Caco-2 (cell line): ENCODE measurements at regions of chr2 and their contacts with region 1.

Region 1: GRCh38 chr2:211248847-211249246 is 692.4 kb downstream of the CPS1 start:
- DNase-seq: peak in 1 of 2 experiments; percentile 13
- H3K4me3 ChIP-seq: no peak overlapping the region
- H3K4me3 Mint-ChIP-seq: no peak overlapping the region
- H3K27ac Mint-ChIP-seq: no peak overlapping the region
- H3K4me1 ChIP-seq: peaks cover 23% of the 10 kb centered on the region
- H3K4me1 Mint-ChIP-seq: peaks cover 8% of the 10 kb centered on the region
- H3K27me3 ChIP-seq: no peaks in the 10 kb centered on the region
- H3K27me3 Mint-ChIP-seq: no peaks in the 10 kb centered on the region
- CTCF ChIP-seq: no peak

Region 2: GRCh38 chr2:211237586-211238275 is 11.1 kb before region 1 on chr2:
- CTCF ChIA-PET with region 1: no interaction called
- POLR2A ChIA-PET with region 1: no interaction called
- intact Hi-C with region 1: loop called (anchors 1 kb)
- DNase-seq: peak in 1 of 2 experiments; percentile 9
- H3K4me3 ChIP-seq: no peak overlapping the region
- H3K4me3 Mint-ChIP-seq: no peak overlapping the region
- H3K27ac Mint-ChIP-seq: peak overlapping the region; percentile 40
- H3K4me1 ChIP-seq: peaks cover 24% of the 10 kb centered on the region
- H3K4me1 Mint-ChIP-seq: peaks cover 18% of the 10 kb centered on the region
- H3K27me3 ChIP-seq: no peaks in the 10 kb centered on the region
- H3K27me3 Mint-ChIP-seq: no peaks in the 10 kb centered on the region
- CTCF ChIP-seq: no peak

Region 3: DNA sequence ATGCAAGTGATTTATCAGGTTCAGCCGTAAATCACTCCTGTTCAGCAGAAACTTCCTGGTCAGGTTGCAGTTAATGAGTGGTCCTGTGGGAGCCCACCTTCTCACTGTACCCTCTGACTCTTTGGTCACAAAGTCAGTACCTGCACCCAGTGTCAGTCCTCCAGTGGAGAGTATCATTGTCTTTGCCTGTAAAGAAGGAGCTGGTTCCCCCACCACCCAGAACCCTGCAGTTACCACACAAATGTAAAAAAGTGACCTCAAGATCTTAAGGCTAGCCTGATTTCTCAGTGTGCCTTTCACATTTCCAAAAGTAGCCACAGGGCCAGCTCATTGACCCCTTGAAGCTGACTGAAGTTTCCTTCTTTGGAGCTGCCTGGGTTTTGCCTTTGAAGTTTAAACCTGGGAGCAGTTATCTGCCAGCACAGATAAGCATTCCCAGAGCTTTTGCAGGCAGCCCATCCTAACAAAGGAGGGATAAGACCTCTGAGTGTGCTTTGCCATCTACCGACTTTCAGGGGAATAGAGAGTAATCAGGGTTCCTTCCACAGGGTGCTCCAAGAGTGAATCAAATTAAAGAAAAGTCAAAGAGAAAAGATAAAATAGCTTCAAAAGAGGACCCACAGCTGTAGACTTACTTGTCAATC is 32.7 kb after region 1 on chr2:
- CTCF ChIA-PET with region 1: no interaction called
- POLR2A ChIA-PET with region 1: no interaction called
- intact Hi-C with region 1: loop called (anchors 2 kb)
- DNase-seq: peak; percentile 48 to 59
- H3K4me3 ChIP-seq: no peak overlapping the region
- H3K4me3 Mint-ChIP-seq: no peak overlapping the region
- H3K27ac Mint-ChIP-seq: no peak overlapping the region
- H3K4me1 ChIP-seq: peaks cover 15% of the 10 kb centered on the region
- H3K4me1 Mint-ChIP-seq: peaks cover 13% of the 10 kb centered on the region
- H3K27me3 ChIP-seq: no peaks in the 10 kb centered on the region
- H3K27me3 Mint-ChIP-seq: no peaks in the 10 kb centered on the region
- CTCF ChIP-seq: peak in 1 of 2 experiments; percentile 29

Region 4: DNA sequence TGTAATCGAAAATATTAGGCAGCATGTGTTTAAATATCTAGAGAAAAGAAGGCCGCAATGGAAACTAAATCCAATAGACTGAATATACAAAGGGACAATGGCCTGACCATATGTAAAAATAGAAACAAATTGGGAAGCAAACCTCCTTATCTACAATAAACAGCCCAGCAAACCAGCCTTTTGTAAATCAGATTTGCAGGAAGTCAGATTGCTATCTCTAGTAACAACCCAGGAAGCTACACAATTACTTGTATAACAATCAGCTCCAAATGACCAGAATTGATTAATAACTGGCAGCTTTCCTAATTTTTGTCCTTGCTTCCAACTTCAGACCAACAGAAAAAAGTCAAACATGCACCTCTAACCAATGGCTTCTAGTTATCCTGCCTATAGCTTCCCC is 167.5 kb after region 1 on chr2:
- CTCF ChIA-PET with region 1: no interaction called
- POLR2A ChIA-PET with region 1: no interaction called
- intact Hi-C with region 1: no loop called
- DNase-seq: no peak
- H3K4me3 ChIP-seq: no peak overlapping the region
- H3K4me3 Mint-ChIP-seq: no peak overlapping the region
- H3K27ac Mint-ChIP-seq: no peak overlapping the region
- H3K4me1 ChIP-seq: no peaks in the 10 kb centered on the region
- H3K4me1 Mint-ChIP-seq: no peaks in the 10 kb centered on the region
- H3K27me3 ChIP-seq: no peaks in the 10 kb centered on the region
- H3K27me3 Mint-ChIP-seq: no peaks in the 10 kb centered on the region
- CTCF ChIP-seq: no peak